Tibial artery (tissue), 4 donors: ENCODE measurements at regions of chr15 and their contacts with region 1.

Region 1: GRCh38 chr15:40782580-40783227 is 12.9 kb downstream of the C15orf62 start:
- DNase-seq: peak in 1 of 2 donors; percentile 65
- H3K4me3 ChIP-seq: no peak overlapping the region
- H3K27ac ChIP-seq: no peak overlapping the region
- H3K4me1 ChIP-seq: peaks cover 0 to 21% (median 8%) of the 10 kb centered on the region in 4 donors
- H3K27me3 ChIP-seq: no peaks in the 10 kb centered on the region
- CTCF ChIP-seq: peak; percentile 28 to 34

Region 2: DNA sequence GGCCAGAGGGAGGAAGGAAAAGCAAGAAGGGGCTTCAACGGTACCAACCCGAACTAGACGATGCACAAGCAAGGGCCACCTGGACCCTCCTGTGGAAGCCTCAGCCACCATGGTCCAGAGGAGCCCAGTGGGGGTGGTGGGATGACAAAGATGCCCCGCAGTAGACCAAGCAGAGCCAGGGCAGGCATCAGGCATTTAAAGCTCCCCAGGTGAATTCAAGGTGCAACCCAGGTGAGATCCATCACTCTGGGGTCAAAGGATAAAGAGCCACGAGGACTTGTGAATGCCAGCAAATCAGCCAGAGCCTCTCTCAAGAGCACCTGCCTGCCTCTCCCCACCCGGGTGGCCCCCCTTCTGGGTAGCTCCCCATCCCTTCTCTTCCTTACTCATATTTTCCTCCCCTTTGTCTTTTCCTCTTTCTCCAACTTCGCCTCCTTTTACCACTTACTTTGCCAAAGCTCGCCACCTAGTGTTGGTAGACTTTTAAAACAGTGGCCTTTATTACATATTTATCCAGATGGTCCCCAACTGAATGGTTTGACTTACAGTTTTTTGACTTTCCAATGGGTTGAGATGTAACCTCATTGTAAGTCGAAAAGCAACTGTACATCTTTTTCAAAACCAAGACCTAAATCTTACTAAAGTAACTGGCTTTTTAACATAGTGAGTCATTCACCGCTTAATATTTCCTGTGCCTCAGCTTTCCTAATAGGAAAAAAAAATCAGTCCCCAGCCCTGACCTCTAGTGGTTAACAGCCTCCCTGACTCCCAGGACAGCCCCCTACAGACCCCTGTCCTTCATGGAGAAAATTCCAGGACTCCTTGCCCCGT is 1354.9 kb after region 1 on chr15:
- intact Hi-C with region 1: loop called (anchors 10 kb)
- DNase-seq: peak in 1 of 2 donors; percentile 34
- H3K4me3 ChIP-seq: no peak overlapping the region
- H3K27ac ChIP-seq: no peak overlapping the region
- H3K4me1 ChIP-seq: no peaks in the 10 kb centered on the region
- H3K27me3 ChIP-seq: peaks cover 0 to 3% of the 10 kb centered on the region in 2 donors
- CTCF ChIP-seq: peak; percentile 36 to 37